Naive thymus-derived CD4-positive, alpha-beta T cell (primary cell): ENCODE measurements at regions of chr20 and their contacts with region 1.

Region 1: DNA sequence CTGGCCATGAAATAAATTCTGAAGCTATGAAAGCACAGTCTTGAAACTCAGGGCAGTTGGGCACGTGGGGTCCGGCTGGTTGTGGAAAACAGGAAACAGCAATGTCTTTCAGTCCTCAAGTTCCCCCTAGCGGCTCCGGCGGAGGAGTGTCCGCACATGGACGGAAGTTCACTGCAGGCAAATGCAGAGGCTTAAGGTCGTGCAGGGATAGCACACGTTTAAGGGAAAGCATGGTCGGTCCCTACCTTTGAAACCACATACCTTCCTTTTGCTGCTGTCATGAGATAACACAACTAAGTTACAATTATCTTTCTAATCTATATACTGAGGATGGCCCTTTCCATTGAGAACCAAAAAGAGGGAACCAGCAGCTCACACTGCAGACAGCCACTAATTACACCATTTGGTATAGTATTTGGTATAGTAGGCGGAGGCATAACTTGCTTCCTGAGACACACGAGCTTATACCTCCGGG is 52.6 kb upstream of the NFATC2 start:
- DNase-seq: peak; percentile 45 to 75 (median 68)
- ATAC-seq: peak; percentile 95
- H3K4me3 ChIP-seq: no peak overlapping the region
- H3K4me3 Mint-ChIP-seq: peak overlapping the region; percentile 53 to 76 (median 66)
- H3K27ac ChIP-seq: no peak overlapping the region
- H3K27ac Mint-ChIP-seq: peak overlapping the region; percentile 14 to 93 (median 69)
- H3K4me1 ChIP-seq: no peaks in the 10 kb centered on the region
- H3K4me1 Mint-ChIP-seq: peaks cover 8 to 32% (median 13%) of the 10 kb centered on the region in 7 donors
- H3K27me3 ChIP-seq: no peaks in the 10 kb centered on the region
- H3K27me3 Mint-ChIP-seq: peaks cover 0 to 9% (median 0%) of the 10 kb centered on the region in 5 donors

Region 2: DNA sequence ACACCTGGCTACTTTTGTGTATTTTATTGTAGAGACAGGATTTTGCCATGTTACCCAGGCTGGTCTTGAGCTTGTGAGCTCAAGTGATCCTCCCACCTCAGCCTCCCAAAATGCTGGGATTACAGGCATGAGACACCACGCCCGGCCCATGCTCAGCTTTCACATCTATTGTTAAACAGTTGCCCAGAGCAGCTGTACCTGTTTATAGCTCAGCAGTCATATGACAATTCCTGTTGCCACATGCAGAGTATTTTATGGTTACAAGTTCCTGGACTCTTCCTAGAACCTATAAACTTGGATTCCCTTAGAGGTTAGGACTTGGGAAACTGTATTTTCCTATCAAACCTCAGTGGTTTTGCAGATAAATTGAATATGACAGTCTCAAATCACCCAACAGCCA is 383.9 kb before region 1 on chr20:
- CTCF ChIA-PET with region 1: no interaction called
- POLR2A ChIA-PET with region 1: no interaction called
- intact Hi-C with region 1: loop called in 1 of 2 experiments (anchors 10 kb)
- DNase-seq: no peak
- ATAC-seq: no peak
- H3K4me3 ChIP-seq: no peak overlapping the region
- H3K4me3 Mint-ChIP-seq: no peak overlapping the region
- H3K27ac ChIP-seq: no peak overlapping the region
- H3K27ac Mint-ChIP-seq: no peak overlapping the region
- H3K4me1 ChIP-seq: no peaks in the 10 kb centered on the region
- H3K4me1 Mint-ChIP-seq: peaks cover 0 to 3% (median 0%) of the 10 kb centered on the region in 7 donors
- H3K27me3 ChIP-seq: peaks cover 0 to 3% of the 10 kb centered on the region in 2 donors
- H3K27me3 Mint-ChIP-seq: peaks cover 29 to 60% (median 40%) of the 10 kb centered on the region in 5 donors

Region 3: DNA sequence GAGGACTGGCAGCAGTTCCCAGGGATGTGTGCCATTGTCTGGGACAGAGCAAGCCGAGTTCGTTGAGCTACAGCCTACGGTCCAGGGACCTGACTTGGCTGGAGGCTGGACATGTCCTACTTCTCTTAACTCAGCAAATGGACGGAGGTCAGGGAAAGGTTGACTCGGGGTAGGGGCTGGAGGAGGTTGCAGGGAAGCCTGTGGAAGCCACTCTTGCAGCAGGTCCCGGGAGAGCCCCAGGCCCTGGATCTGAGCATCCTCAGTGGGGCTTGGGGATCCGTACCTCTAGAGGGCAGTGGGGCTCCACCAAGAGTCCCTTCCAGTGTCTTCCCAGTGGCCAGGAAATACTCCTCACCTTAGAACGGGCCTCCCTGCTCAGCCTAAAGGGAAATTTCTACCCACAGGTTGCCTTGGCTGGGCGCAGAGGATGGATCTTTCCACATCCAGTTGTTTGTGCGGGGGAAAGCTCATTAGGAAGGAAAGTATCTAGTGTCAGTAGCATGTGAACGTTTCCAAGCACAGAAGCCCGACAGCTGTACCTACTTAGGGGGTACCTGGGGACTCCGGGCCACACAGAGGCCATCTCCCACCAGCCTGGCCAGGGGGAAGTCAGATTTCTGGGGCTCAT is 222.8 kb before region 1 on chr20:
- CTCF ChIA-PET with region 1: interaction called, 20 read pairs
- POLR2A ChIA-PET with region 1: no interaction called
- intact Hi-C with region 1: loop called (anchors 1 kb)
- DNase-seq: peak; percentile 11 to 58 (median 41)
- ATAC-seq: peak; percentile 80
- H3K4me3 ChIP-seq: no peak overlapping the region
- H3K4me3 Mint-ChIP-seq: no peak overlapping the region
- H3K27ac ChIP-seq: no peak overlapping the region
- H3K27ac Mint-ChIP-seq: no peak overlapping the region
- H3K4me1 ChIP-seq: peaks cover 0 to 3% of the 10 kb centered on the region in 2 donors
- H3K4me1 Mint-ChIP-seq: peaks cover 0 to 14% (median 0%) of the 10 kb centered on the region in 7 donors
- H3K27me3 ChIP-seq: no peaks in the 10 kb centered on the region
- H3K27me3 Mint-ChIP-seq: peaks cover 0 to 2% (median 0%) of the 10 kb centered on the region in 5 donors

Region 4: GRCh38 chr20:51385646-51386530 is 209.2 kb before region 1 on chr20:
- CTCF ChIA-PET with region 1: interaction called, 38 read pairs
- POLR2A ChIA-PET with region 1: interaction called, 4 read pairs
- intact Hi-C with region 1: loop called (anchors 1 kb)
- DNase-seq: peak in 4 of 9 donors; percentile 10 to 27 (median 20)
- ATAC-seq: peak; percentile 48
- H3K4me3 ChIP-seq: no peak overlapping the region
- H3K4me3 Mint-ChIP-seq: no peak overlapping the region
- H3K27ac ChIP-seq: no peak overlapping the region
- H3K27ac Mint-ChIP-seq: peak overlapping the region in 8 of 9 donors; percentile 4 to 77 (median 62)
- H3K4me1 ChIP-seq: peaks cover 0 to 67% of the 10 kb centered on the region in 2 donors
- H3K4me1 Mint-ChIP-seq: peaks cover 0 to 61% (median 5%) of the 10 kb centered on the region in 7 donors
- H3K27me3 ChIP-seq: no peaks in the 10 kb centered on the region
- H3K27me3 Mint-ChIP-seq: no peaks in the 10 kb centered on the region

Region 5: DNA sequence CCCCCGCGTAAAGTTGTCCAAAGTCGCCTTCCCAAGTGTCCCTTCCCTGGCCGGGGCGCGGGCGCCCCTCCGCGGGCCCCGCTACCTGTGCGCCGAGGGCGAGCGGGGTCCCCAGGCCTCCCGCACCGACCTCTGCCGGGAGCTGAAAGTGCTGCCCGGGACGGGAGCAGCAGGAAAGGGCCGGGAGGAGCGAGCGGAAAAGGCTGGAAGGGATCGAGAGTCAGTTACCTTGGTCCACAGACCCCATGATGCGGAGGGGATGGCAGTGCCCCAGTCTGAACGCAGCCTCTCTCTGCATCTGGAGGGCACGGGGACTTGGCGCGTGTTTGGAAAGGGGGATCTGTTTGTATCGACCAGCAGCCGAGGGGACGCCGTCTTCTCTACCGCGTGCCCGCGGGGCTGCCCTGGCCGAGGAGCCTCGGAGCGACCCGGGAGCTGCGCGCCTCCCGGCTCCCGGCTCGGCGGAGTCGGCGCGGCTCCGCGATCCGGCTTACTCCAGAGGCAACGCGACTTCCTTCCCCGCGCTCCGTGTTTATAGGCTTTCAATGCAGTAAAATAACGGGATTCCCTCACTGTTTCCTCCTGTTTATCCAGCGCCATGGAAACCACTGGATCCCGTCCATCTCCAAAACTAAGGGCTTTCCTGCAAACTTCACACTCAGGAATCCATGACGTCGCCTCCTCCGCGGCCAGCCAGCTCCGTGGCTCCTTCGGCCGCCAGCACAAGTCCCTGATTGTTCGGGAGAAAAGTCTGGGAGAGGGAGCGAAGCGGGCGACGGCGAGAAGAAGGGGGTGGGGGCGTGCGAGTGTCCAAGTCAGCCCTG is 32.6 kb before region 1 on chr20:
- CTCF ChIA-PET with region 1: no interaction called
- POLR2A ChIA-PET with region 1: interaction called, 3 read pairs
- intact Hi-C with region 1: loop called in 1 of 2 experiments (anchors 1 kb)
- DNase-seq: peak in 5 of 9 donors; percentile 12 to 32 (median 21)
- ATAC-seq: peak; percentile 32
- H3K4me3 ChIP-seq: peak overlapping the region; percentile 49
- H3K4me3 Mint-ChIP-seq: peak overlapping the region; percentile 66 to 84 (median 74)
- H3K27ac ChIP-seq: no peak overlapping the region
- H3K27ac Mint-ChIP-seq: no peak overlapping the region
- H3K4me1 ChIP-seq: peaks cover 9 to 11% of the 10 kb centered on the region in 2 donors
- H3K4me1 Mint-ChIP-seq: peaks cover 10 to 36% (median 19%) of the 10 kb centered on the region in 7 donors
- H3K27me3 ChIP-seq: peaks cover 16 to 37% of the 10 kb centered on the region in 2 donors
- H3K27me3 Mint-ChIP-seq: peaks cover 38 to 78% (median 53%) of the 10 kb centered on the region in 5 donors

Region 6: GRCh38 chr20:51910321-51911053 is 315.4 kb after region 1 on chr20:
- CTCF ChIA-PET with region 1: no interaction called
- POLR2A ChIA-PET with region 1: no interaction called
- intact Hi-C with region 1: no loop called
- DNase-seq: no peak
- ATAC-seq: no peak
- H3K4me3 ChIP-seq: no peak overlapping the region
- H3K4me3 Mint-ChIP-seq: no peak overlapping the region
- H3K27ac ChIP-seq: no peak overlapping the region
- H3K27ac Mint-ChIP-seq: no peak overlapping the region
- H3K4me1 ChIP-seq: no peaks in the 10 kb centered on the region
- H3K4me1 Mint-ChIP-seq: no peaks in the 10 kb centered on the region
- H3K27me3 ChIP-seq: no peaks in the 10 kb centered on the region
- H3K27me3 Mint-ChIP-seq: peaks cover 2 to 30% (median 22%) of the 10 kb centered on the region in 5 donors